Posterior vena cava (tissue), 2 donors: ENCODE measurements at regions of chr12 and their contacts with region 1.

Region 1: DNA sequence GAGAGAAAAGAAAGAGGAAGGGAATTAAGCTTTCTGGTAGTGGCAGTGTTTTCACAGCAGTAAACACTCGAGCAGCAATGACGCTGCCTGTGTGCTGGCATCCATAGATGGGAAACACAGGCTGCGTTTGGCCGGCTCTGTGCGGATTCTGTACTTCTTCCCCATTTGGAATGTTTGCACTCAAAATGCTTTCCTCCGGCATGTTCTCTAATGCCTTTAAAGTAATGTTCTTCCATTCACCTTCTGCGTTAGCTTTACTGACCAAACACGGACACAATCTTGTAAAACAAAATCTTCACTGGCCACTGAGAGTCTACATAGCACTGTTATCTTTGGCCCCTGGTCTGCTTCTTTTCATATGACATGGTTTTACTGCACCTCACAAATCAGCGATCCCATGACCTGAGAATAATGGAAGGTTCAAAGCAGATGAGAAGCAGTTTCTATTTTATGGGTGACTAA is 31.4 kb downstream of the DCP1B start:
- DNase-seq: peak; percentile 84

Region 2: DNA sequence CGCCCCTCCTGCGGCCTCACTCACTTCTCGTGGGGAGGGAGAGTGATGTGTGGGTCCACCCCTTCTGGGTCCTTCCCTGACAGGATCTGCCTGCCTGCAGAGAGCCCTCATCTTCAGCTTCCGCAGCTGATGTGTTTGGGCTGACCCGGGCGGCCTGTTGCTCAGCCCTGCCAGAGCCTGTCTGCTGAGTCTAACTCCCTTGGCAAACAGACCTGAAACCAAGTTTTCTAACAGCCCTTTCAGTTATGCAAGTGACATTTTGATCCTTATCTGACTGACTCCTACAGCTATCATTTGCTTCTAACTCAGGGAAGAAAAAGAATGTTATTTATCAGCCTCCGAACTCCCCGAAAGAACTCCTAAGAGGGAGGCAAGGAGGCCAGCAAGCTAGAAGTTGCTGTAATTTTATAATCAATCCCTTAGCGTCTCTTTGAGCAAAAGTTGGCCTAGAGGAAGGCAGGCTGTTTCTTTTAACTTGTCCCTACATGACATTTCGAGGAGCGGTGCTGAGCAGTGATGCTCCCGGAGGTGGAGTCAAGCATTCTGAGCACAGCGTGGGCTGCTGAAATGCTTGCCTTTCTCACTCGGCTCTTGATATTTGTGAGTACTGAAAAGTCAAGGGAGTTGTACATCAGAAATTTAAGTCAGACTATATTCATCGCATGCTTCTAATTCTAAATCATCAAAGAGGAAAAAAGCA is 23.0 kb before region 1 on chr12:
- intact Hi-C with region 1: no loop called
- DNase-seq: peak; percentile 85

Region 3: GRCh38 chr12:2023365-2023764 is 50.5 kb after region 1 on chr12:
- intact Hi-C with region 1: loop called in 1 of 2 experiments (anchors 10 kb)
- DNase-seq: no peak

Region 4: GRCh38 chr12:2034633-2035430 is 61.9 kb after region 1 on chr12:
- intact Hi-C with region 1: loop called in 1 of 2 experiments (anchors 10 kb)
- DNase-seq: peak; percentile 96

Region 5: GRCh38 chr12:2364631-2365051 is 391.8 kb after region 1 on chr12:
- intact Hi-C with region 1: no loop called
- DNase-seq: no peak